ENCODE measurements at regions of chr12 and their contacts with region 1.

Region 1: DNA sequence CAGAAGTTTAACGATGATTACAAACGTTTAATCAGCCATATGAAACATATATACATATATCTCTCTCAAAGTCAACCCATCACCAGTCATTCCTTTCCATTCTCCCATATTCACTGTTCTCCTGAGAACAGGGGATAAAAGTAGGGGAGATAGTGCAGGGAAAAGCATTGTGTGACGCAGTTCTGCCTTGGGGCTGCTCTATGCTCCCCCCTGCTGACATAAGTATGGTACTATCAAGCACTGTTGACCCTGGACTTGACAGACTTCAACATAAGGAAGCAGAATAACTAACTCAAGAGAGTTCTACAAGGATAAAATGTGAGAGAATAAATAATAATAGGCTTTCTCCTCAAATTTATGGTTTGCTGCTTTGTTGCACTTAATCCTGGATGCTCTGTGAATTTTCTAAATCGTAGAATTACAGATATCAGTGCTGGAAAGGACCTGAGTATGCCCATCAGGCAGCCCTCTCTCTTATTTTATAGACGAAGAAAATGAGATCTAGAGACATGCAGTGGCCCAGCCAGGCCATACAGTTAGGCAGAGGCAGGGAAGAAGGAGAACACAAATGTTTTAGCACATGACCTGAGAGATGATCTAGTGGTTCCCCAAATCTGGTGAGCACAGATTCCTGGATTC is 87.2 kb downstream of the SCN8A start:
- DNase-seq: peak; percentile 73
- H3K4me3 ChIP-seq: no peak overlapping the region
- H3K27ac ChIP-seq: no peak overlapping the region
- H3K4me1 ChIP-seq: peaks cover 3% of the 10 kb centered on the region
- H3K27me3 ChIP-seq: no peaks in the 10 kb centered on the region
- CTCF ChIP-seq: peak; percentile 76 to 83
- POLR2A ChIP-seq: no peak

Region 2: GRCh38 chr12:51531978-51532497 is 146.2 kb before region 1 on chr12:
- CTCF ChIA-PET with region 1: interaction called, 8 read pairs
- POLR2A ChIA-PET with region 1: no interaction called
- dilution Hi-C with region 1: no loop called
- intact Hi-C with region 1: loop called (anchors 1 kb)
- DNase-seq: peak; percentile 73
- H3K4me3 ChIP-seq: no peak overlapping the region
- H3K27ac ChIP-seq: no peak overlapping the region
- H3K4me1 ChIP-seq: no peaks in the 10 kb centered on the region
- H3K27me3 ChIP-seq: peaks cover 2 to 3% of the 10 kb centered on the region in 2 experiments
- CTCF ChIP-seq: peak; percentile 82 to 90
- POLR2A ChIP-seq: no peak

Region 3: DNA sequence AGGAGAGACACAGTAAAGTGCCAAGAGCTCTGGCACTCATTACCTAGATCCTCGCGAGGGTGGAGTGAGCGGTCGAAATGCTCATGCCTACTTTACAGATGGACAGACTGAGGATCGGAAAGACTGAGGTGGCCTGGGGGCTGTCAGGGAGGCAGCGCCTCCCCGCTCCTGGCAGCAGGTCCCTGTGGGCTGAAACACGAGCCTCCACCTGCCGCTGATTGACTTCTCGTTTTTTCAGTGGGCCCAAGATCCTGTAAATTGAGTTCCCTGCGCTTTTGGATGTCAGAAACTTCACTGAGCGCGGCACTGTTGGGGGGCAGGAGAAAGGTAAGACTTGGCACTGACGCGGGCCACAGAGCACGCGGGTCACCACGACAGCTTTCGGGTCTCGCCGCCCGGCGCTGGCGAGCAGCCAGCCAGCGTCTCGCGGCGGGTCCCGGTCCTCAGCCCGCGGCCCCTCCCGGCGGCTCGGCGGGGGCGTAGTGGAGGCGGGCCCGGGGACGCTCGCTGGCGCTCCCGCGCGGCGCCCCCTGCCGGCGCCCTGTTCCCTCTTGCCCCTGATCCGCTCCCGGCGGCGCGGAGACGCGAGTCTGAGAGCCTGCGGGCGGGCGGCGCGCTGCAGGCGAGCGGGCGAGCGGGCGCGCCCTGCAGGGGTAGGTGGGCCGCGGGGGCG is 87.7 kb before region 1 on chr12:
- CTCF ChIA-PET with region 1: interaction called, 4 read pairs
- POLR2A ChIA-PET with region 1: no interaction called
- dilution Hi-C with region 1: no loop called
- intact Hi-C with region 1: loop called (anchors 2 kb)
- DNase-seq: peak; percentile 64
- H3K4me3 ChIP-seq: peak overlapping the region; percentile 34 to 85 (median 58)
- H3K27ac ChIP-seq: no peak overlapping the region
- H3K4me1 ChIP-seq: peaks cover 6% of the 10 kb centered on the region
- H3K27me3 ChIP-seq: peaks cover 17 to 20% of the 10 kb centered on the region in 2 experiments
- CTCF ChIP-seq: peak; percentile 61 to 69
- POLR2A ChIP-seq: no peak

Region 4: GRCh38 chr12:51744235-51744634 is 66.0 kb after region 1 on chr12:
- CTCF ChIA-PET with region 1: no interaction called
- POLR2A ChIA-PET with region 1: no interaction called
- dilution Hi-C with region 1: no loop called
- intact Hi-C with region 1: no loop called
- DNase-seq: peak; percentile 91
- H3K4me3 ChIP-seq: no peak overlapping the region
- H3K27ac ChIP-seq: peak overlapping the region; percentile 77
- H3K4me1 ChIP-seq: peaks cover 20% of the 10 kb centered on the region
- H3K27me3 ChIP-seq: no peaks in the 10 kb centered on the region
- CTCF ChIP-seq: no peak
- POLR2A ChIP-seq: no peak